ENCODE measurements at regions of chr10 and their contacts with region 1.

Region 1: DNA sequence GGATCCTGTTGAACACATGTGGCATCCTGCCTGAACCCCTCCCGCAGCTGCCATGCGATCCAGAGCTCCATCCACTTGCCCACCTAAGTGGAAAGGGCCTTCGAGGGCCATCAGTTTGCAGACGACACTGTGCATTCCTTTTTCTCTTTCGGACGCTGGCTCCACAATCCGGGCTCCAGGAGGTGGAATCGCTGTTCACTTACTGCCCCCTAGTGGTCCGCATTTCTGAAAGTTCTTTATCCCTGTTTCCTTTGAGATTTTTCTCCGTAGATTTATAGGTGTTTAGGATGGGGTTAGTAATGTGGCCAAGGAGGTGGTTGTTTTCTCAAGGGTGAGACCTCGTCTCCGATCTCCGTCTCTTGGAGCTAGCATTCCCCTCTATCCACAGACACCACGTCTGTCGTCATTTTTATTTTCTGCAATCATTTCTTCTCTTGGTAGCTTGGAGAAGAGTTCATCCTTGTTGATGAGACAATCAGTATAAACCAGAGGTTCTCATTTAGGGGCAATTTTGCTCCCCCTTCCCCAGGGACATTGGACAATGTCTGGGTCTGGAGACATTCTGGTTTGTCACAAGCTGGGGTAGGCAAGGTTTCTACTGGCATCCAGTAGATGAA is 204.6 kb downstream of the ARHGAP21 start:
- DNase-seq: peak; percentile 65
- ATAC-seq: peak; percentile 31
- H3K4me3 Mint-ChIP-seq: no peak overlapping the region
- H3K27ac Mint-ChIP-seq: no peak overlapping the region
- H3K4me1 Mint-ChIP-seq: peaks cover 13% of the 10 kb centered on the region
- H3K27me3 Mint-ChIP-seq: peaks cover 2% of the 10 kb centered on the region

Region 2: DNA sequence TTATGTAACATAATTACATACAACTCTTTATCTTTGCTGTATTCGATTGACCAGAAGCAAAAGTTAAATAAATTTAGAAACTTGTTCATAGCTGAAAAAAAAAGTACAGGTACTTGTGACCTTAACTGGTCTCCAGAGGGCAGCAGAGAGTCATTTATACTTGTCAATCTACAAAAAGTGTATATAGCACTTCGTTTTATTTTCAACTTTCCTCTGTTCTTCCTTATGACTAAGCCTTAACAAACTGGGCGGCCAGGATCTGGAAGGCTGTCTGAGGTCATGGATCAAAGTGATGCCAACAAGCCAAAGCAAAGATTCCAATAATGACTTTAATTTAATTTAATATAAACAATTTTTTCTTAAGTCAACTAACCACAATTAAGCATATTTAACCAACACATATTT is 1204.3 kb before region 1 on chr10:
- CTCF ChIA-PET with region 1: no interaction called
- POLR2A ChIA-PET with region 1: no interaction called
- intact Hi-C with region 1: loop called in 1 of 2 experiments (anchors 10 kb)
- DNase-seq: peak; percentile 63
- ATAC-seq: peak; percentile 36
- H3K4me3 Mint-ChIP-seq: no peak overlapping the region
- H3K27ac Mint-ChIP-seq: no peak overlapping the region
- H3K4me1 Mint-ChIP-seq: no peaks in the 10 kb centered on the region
- H3K27me3 Mint-ChIP-seq: no peaks in the 10 kb centered on the region

Region 3: GRCh38 chr10:23994479-23995046 is 524.5 kb before region 1 on chr10:
- CTCF ChIA-PET with region 1: interaction called, 13 read pairs
- POLR2A ChIA-PET with region 1: no interaction called
- intact Hi-C with region 1: loop called (anchors 1 to 5 kb)
- DNase-seq: peak; percentile 60
- ATAC-seq: no peak
- H3K4me3 Mint-ChIP-seq: no peak overlapping the region
- H3K27ac Mint-ChIP-seq: no peak overlapping the region
- H3K4me1 Mint-ChIP-seq: no peaks in the 10 kb centered on the region
- H3K27me3 Mint-ChIP-seq: peaks cover 2% of the 10 kb centered on the region

Region 4: GRCh38 chr10:24201503-24202180 is 317.4 kb before region 1 on chr10:
- CTCF ChIA-PET with region 1: no interaction called
- POLR2A ChIA-PET with region 1: no interaction called
- intact Hi-C with region 1: loop called in 1 of 2 experiments (anchors 5 kb)
- DNase-seq: no peak
- ATAC-seq: no peak
- H3K4me3 Mint-ChIP-seq: no peak overlapping the region
- H3K27ac Mint-ChIP-seq: no peak overlapping the region
- H3K4me1 Mint-ChIP-seq: peaks cover 8% of the 10 kb centered on the region
- H3K27me3 Mint-ChIP-seq: peaks cover 20% of the 10 kb centered on the region

Region 5: DNA sequence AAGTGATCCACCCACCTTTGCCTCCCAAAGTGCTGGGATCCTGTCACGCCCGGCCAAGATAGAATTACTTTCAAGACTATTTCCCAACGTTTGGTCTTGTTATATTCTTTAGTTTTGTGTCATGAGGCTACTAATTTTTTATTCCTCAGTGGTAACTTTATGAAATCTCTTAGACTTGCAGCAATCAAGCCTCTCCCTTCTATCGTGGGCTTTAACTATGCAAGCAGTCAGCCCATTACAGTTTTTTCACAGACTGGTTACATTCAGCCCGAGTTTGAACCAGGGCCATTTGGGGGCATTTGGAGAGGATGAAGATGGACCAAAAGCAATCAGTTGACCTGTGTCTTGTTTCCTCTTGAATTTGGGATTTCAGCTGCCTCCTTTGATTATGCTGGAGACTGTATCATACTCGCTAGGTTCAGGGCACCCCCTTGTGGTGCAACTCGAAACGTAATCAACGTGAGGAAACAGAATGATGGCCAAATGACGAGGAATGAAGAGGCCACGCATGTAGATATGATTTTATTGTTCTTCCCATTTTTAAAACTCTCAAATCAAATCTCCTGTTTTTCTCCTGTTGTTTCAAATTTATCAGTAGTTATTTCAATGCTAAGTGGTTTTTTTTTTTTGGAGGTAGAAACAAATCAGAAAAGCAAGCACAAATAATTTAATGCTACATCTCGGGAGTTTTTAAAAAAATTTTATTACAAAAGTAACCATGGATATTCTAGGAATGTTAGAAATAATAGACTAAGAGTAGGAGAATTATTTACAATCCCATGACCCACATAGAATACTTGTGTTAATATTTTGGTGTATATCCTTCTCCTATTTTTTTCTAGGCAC is 158.6 kb before region 1 on chr10:
- CTCF ChIA-PET with region 1: no interaction called
- POLR2A ChIA-PET with region 1: no interaction called
- intact Hi-C with region 1: loop called in 1 of 2 experiments (anchors 1 kb)
- DNase-seq: peak; percentile 71
- ATAC-seq: no peak
- H3K4me3 Mint-ChIP-seq: no peak overlapping the region
- H3K27ac Mint-ChIP-seq: no peak overlapping the region
- H3K4me1 Mint-ChIP-seq: no peaks in the 10 kb centered on the region
- H3K27me3 Mint-ChIP-seq: peaks cover 5% of the 10 kb centered on the region

Region 6: DNA sequence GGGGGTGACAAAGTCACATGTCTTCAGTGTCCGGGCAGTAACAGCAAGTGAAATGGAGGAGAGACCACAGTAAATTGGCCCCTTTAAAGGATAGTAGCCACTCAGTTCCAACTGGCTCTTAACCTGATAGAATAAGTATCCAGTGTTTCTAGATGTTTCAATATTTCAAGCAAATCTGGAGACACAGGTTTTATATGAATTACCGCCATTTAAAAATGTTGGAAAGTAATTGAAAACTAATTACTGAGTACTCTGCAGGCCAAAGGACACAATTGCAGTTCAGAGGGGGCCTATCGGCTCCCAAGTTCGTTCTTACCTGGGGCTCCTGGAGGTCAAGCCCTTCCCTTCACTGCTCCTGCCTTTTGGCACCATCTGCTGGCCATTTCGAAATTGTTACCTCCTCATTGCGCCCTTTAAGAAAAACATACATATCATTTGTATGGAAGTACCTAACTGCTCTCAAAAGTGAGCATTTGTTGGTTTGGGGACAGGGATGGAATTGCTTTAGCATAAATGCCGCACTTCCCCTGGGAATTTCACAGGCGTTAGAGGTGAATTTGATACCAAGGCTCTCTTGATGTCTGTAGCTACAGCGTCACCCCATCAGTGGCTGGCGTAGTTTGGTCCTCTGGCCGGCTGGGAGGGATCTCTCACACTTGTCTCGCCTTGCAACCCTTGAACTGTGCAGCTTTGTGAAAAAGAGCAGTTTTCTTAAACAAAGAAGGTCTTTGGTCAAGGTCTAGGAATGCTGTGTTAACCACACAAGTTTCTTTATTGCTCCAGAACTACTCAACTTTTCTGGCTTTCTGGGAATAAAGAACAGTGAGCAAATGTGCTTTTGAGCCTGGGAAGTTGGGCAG is 15.4 kb before region 1 on chr10:
- CTCF ChIA-PET with region 1: interaction called, 35 read pairs
- POLR2A ChIA-PET with region 1: no interaction called
- intact Hi-C with region 1: no loop called
- DNase-seq: peak; percentile 63
- ATAC-seq: peak; percentile 57
- H3K4me3 Mint-ChIP-seq: no peak overlapping the region
- H3K27ac Mint-ChIP-seq: no peak overlapping the region
- H3K4me1 Mint-ChIP-seq: no peaks in the 10 kb centered on the region
- H3K27me3 Mint-ChIP-seq: peaks cover 14% of the 10 kb centered on the region

Region 7: GRCh38 chr10:24556750-24557742 is 38.0 kb after region 1 on chr10:
- CTCF ChIA-PET with region 1: interaction called, 11 read pairs
- POLR2A ChIA-PET with region 1: no interaction called
- intact Hi-C with region 1: loop called in 1 of 2 experiments (anchors 2 kb)
- DNase-seq: peak; percentile 56
- ATAC-seq: peak; percentile 83
- H3K4me3 Mint-ChIP-seq: no peak overlapping the region
- H3K27ac Mint-ChIP-seq: no peak overlapping the region
- H3K4me1 Mint-ChIP-seq: peaks cover 4% of the 10 kb centered on the region
- H3K27me3 Mint-ChIP-seq: peaks cover 2% of the 10 kb centered on the region

Region 8: DNA sequence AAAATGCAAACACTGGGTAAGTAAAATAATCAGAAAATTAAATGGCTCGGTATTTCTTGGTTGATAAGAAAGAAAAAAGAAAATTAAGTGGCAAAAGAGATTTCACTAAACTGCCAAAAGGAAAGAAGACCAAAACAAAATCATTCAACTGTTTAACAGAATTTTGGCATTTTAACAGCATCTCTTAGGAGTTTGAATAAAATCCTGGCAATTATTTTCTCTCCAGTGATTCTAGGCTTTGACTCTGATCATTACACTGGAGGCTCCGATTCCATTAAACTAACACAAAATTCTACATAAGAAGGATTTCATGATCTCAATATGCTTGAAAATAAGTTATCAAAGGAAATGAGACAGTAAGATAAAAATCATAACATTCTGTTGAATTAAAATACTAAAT is 142.3 kb after region 1 on chr10:
- CTCF ChIA-PET with region 1: no interaction called
- POLR2A ChIA-PET with region 1: no interaction called
- intact Hi-C with region 1: no loop called
- DNase-seq: no peak
- ATAC-seq: no peak
- H3K4me3 Mint-ChIP-seq: no peak overlapping the region
- H3K27ac Mint-ChIP-seq: no peak overlapping the region
- H3K4me1 Mint-ChIP-seq: no peaks in the 10 kb centered on the region
- H3K27me3 Mint-ChIP-seq: no peaks in the 10 kb centered on the region

Measured in activated CD4-positive, alpha-beta T cell treated with anti-CD3 and anti-CD28 coated beads for 36 hours (primary cell).